Left ventricle myocardium superior (tissue), 1 donor: ENCODE measurements at regions of chr9 and their contacts with region 1.

Region 1: DNA sequence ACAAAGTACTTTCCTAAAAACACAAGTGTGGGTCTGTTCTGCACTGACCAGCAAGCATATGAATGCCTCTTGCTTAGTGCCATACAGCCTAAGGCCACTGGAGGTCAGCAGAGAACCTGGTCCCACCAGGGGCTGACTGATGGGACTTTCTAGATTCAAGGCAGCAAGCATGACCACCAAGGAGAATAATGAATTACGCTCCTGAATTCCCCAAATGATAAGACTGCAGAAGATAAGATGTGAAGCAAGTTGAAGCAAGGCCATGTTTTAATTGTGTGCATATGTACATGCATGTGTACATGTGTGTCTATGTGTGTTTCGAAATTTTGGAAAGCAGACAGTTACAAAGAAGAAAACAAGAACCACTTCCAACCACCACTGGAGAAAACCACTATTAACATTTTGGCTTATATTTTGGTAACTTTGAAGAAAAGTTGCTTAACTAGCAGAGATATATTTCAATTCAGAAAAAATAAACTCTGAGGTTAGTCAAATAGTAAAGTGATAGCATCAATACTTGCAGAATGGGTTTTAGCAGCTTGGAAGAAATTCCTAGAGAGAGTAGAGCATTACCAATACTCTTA is 70.5 kb downstream of the ERP44 start:
- DNase-seq: peak; percentile 62
- ATAC-seq: peak; percentile 92

Region 2: GRCh38 chr9:100222674-100223073 is 194.4 kb after region 1 on chr9:
- intact Hi-C with region 1: loop called (anchors 5 kb)
- DNase-seq: no peak
- ATAC-seq: no peak

Region 3: GRCh38 chr9:100322954-100323536 is 294.8 kb after region 1 on chr9:
- intact Hi-C with region 1: loop called (anchors 10 kb)
- DNase-seq: no peak
- ATAC-seq: no peak